HepG2 (cell line): ENCODE measurements at regions of chr2 and their contacts with region 1.

Region 1: DNA sequence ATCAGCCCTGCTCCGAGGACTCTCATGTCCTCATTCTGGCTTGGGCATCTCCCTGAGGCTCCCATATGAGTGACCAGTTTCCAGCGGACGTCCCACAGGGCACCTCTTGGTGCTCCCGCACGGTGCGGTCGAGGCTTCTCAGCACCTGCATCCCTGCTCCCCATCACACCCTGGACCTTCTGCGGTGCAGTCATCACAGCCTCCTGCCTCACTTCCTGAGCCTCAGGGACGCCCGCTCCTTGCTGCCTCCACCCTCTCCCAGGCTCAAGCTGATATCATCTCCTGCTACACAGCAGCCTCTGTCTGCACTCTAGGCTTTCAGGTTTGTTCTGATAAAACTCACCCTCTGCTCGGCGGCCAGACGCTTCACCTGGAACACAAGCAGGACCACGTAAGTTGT is 185.0 kb downstream of the TMEM18 start:
- DNase-seq: no peak
- ATAC-seq: no peak
- H3K4me3 ChIP-seq: no peak overlapping the region
- H3K27ac ChIP-seq: no peak overlapping the region
- H3K4me1 ChIP-seq: no peaks in the 10 kb centered on the region
- H3K27me3 ChIP-seq: peaks cover 9 to 28% of the 10 kb centered on the region in 2 experiments; a peak in 4 of 5 replicates
- CTCF ChIP-seq: no peak
- EP300 ChIP-seq: no peak
- POLR2A ChIP-seq: no peak
- RAD21 ChIP-seq: no peak

Region 2: GRCh38 chr2:332597-332996 is 159.6 kb before region 1 on chr2:
- CTCF ChIA-PET with region 1: no interaction called
- POLR2A ChIA-PET with region 1: no interaction called
- in situ Hi-C with region 1: no loop called
- intact Hi-C with region 1: no loop called
- DNase-seq: no peak
- ATAC-seq: no peak
- H3K4me3 ChIP-seq: no peak overlapping the region
- H3K27ac ChIP-seq: no peak overlapping the region
- H3K4me1 ChIP-seq: no peaks in the 10 kb centered on the region
- H3K27me3 ChIP-seq: no peaks in the 10 kb centered on the region
- CTCF ChIP-seq: no peak
- EP300 ChIP-seq: no peak
- POLR2A ChIP-seq: no peak
- RAD21 ChIP-seq: no peak

Region 3: DNA sequence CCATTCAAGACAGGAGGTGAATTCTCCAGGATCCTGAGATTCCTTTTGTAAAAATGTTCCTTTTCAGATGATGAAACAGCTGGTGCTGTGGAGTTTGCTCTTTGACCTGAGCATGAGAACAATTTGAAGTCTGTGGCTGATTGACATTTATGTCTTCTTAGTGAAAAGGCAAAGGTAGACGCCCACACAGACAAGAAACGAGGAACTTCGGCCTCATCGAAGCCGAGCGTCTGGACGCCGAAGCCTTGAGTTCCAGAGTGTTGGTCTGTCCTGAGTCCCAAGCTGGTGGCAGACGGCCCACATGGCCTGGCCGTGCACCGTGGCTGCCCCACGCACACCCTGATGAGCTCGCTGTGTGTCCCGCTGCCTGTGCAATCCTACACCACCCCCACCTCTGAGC is 437.7 kb after region 1 on chr2:
- CTCF ChIA-PET with region 1: no interaction called
- POLR2A ChIA-PET with region 1: no interaction called
- in situ Hi-C with region 1: no loop called
- intact Hi-C with region 1: loop called (anchors 5 kb)
- DNase-seq: no peak
- ATAC-seq: peak; percentile 31; the same call in 1 of the 3 replicates
- H3K4me3 ChIP-seq: no peak overlapping the region
- H3K27ac ChIP-seq: no peak overlapping the region
- H3K4me1 ChIP-seq: no peaks in the 10 kb centered on the region
- H3K27me3 ChIP-seq: peaks cover 7 to 40% of the 10 kb centered on the region in 2 experiments; a peak in 4 of 5 replicates
- CTCF ChIP-seq: no peak
- EP300 ChIP-seq: no peak
- POLR2A ChIP-seq: no peak
- RAD21 ChIP-seq: no peak